ENCODE measurements at regions of chr9 and their contacts with region 1.

Region 1: DNA sequence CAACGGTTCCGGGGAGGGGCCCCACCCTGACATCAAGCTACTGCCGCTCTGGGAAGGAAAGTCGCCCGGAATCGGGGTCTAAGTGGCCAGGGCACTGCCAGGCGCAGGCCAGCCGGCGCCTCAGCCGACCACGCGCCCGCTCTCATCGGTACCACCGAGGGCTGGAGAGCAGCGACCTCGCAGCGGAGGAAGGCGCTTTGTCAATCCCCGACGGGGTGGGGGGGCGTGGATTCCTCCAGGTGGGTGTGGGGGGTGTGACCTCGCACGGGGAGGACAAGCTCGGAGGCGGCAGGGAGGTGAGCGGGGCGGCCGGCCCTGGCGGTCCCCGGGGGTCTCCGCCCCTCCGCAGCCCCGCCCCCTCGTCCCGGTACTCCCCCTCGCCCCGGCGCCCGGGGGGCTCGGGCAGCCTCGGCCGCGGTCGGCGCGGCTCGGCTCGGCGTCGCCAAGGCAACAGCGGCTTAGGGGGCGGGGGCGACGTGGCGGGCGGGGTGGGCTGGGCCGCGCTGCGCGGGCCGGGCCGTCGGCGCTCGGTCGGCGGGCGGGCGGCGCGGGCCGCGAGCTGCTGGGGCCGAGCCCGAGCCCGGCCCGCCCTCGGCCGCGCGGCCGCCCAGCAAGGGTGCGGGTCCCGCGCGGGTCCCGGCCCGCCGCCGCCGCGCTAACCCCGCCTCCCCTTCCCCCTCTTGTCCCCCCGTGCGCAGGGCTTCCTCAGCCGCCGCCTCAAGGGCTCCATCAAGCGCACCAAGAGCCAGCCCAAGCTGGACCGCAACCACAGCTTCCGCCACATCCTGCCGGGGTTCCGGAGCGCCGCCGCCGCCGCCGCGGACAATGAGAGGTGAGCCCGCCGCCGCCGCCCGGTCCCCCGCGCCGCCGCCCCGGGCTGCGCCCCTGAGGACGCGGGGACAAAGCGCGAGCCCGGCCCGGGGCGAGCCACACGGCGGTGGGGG is 47.5 kb downstream of the DAB2IP start:
- DNase-seq: peak; percentile 73 to 90 (median 86)
- ATAC-seq: peak; percentile 30 to 33
- H3K4me3 ChIP-seq: peak overlapping the region; percentile 72
- H3K27ac ChIP-seq: no peak overlapping the region
- H3K4me1 ChIP-seq: peaks cover 14% of the 10 kb centered on the region
- H3K27me3 ChIP-seq: no peaks in the 10 kb centered on the region

Region 2: DNA sequence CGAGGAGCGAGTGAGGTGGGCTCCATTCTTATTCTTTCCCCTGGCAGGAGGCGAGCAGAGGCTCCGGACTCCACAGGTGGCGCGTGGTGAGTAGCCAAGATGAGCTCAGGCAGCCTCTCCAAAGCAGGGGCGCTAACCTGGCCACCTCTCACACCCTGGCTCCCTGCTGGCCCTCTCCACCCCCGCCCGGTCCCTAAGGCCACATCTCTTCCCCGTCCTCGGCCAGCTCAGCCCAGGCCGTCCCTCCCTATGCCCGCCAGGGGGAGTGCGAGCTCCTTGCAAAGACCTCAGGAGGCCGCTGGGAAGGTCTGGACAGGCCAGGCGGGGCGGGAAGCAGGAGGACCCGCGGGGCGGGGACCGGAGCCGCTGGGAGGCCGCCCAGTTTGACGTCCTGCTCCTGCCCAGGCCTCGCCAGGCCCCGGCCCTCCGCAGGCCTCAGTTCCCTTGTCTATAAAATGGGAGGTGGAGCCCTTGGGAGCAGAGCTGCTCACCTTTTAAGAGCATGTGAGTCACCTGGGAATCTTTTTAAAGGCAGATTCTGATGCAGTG is 152.9 kb before region 1 on chr9:
- intact Hi-C with region 1: loop called in 1 of 4 experiments (anchors 10 kb)
- DNase-seq: peak; percentile 98 to 99 (median 99)
- ATAC-seq: peak; percentile 92 to 95
- H3K4me3 ChIP-seq: no peak overlapping the region
- H3K27ac ChIP-seq: no peak overlapping the region
- H3K4me1 ChIP-seq: no peaks in the 10 kb centered on the region
- H3K27me3 ChIP-seq: no peaks in the 10 kb centered on the region

Region 3: DNA sequence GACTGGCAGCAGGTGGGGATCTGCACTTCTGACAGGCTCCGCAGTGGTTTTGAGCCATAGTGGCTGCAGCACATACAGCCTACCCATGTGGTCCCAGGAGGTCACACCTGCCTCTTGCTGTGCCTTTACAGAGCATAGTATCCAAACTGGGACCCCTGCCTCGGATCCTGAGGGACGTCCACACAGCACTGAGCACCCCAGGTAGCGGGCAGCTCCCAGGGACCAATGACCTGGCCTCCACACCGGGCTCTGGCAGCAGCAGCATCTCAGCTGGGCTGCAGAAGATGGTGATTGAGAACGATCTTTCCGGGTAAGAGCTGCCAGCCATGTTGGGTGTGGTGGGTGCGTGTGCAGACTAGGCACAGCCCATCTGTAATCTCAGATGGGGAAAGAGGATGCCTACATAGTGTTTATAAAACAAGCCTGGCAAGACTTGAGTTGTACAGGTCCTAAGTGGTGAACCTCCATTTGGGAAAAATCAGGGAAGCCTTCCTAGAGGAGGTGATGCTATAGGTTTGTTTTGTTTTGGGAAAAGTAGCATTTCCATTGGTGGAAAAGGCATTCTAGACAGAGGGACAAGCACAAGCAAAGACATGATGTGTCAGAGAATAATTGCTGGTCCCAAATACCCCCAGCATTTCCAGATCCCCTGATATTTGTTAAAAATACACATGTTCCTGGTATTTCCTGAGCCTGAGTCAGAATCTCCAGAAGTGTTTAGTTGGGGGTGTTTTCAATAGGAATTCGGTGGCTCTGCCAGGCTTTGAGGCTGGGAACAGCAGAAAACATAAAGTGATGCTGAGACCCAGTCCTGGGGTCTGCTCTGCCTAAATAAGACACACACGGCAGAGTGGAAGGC is 71.7 kb after region 1 on chr9:
- intact Hi-C with region 1: loop called in 1 of 4 experiments (anchors 10 kb)
- DNase-seq: peak in 2 of 3 donors; percentile 33 to 47
- ATAC-seq: no peak
- H3K4me3 ChIP-seq: no peak overlapping the region
- H3K27ac ChIP-seq: no peak overlapping the region
- H3K4me1 ChIP-seq: peaks cover 3% of the 10 kb centered on the region
- H3K27me3 ChIP-seq: no peaks in the 10 kb centered on the region

Region 4: DNA sequence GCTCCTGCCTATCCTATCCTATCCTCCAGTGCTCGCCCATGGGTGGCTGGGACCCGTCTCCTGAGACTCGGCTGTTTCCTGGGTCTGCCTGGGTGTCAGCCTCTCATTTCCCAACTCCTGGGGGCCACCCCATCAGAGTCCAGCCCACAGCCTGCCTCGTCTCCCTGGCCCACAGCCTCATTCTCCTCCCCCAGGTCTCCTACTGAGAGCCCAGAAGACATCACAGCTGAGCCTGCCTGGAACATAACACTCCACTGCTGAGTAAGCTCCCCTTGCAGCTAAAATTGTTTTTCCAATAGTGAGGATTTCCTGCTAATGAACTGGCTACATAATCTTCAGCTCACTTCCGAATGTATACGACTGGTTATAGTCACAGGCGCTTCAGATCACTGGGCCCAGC is 298.9 kb after region 1 on chr9:
- intact Hi-C with region 1: loop called in 2 of 4 experiments (anchors 5 kb)
- DNase-seq: no peak
- ATAC-seq: peak in 1 of 2 donors; percentile 9
- H3K4me3 ChIP-seq: no peak overlapping the region
- H3K27ac ChIP-seq: no peak overlapping the region
- H3K4me1 ChIP-seq: peaks cover 5% of the 10 kb centered on the region
- H3K27me3 ChIP-seq: no peaks in the 10 kb centered on the region